Lower leg skin (tissue), 4 donors: ENCODE measurements at regions of chr4 and their contacts with region 1.

Region 1: DNA sequence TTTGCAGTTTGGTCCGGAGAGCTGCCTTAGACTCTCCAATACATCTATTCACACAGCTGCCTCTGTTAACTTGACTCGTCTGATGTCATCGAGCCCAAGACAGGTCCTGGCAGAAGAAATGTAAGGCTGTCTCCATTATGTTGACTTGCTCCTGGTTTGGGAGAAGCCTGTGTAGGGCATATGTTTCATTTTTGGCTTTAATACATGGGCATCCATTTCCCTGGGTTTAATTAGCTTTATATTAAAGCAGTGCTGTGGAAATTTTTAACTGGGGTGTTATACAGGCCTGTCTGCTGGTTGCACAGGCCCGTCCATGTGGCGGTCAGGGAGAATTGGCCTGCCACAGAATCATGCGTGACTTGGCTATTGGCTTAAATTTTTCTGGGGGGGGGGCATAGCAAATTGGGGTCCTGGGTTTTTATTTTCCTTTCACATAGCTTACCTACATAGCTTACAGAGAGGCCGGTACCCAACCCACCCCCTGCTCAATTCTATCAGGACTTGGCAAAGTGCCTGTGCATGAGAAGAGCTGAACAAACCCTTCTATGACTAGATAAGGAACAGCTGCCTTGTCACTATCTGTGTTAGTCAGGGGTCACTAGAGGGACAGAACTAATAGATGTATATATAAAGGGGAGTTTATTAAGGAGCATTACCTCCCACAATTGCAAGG is 123.5 kb upstream of the WDR1 start:
- DNase-seq: no peak
- H3K4me3 ChIP-seq: no peak overlapping the region
- CTCF ChIP-seq: no peak
- POLR2A ChIP-seq: no peak

Region 2: GRCh38 chr4:10207131-10207530 is 33.0 kb before region 1 on chr4:
- intact Hi-C with region 1: loop called (anchors 2 kb)
- DNase-seq: no peak
- H3K4me3 ChIP-seq: no peak overlapping the region
- CTCF ChIP-seq: no peak
- POLR2A ChIP-seq: no peak

Region 3: GRCh38 chr4:10281996-10282395 is 41.9 kb after region 1 on chr4:
- intact Hi-C with region 1: no loop called
- DNase-seq: no peak
- H3K4me3 ChIP-seq: no peak overlapping the region
- CTCF ChIP-seq: no peak
- POLR2A ChIP-seq: no peak